GM12878 (cell line): ENCODE measurements at regions of chr9 and their contacts with region 1.

Region 1: GRCh38 chr9:135410831-135411473 is 68.6 kb upstream of the PPP1R26 start:
- DNase-seq: no peak
- ATAC-seq: no peak
- H3K4me3 ChIP-seq: no peak overlapping the region
- H3K27ac ChIP-seq: no peak overlapping the region
- H3K4me1 ChIP-seq: no peaks in the 10 kb centered on the region
- H3K27me3 ChIP-seq: no peaks in the 10 kb centered on the region
- CTCF ChIP-seq: no peak
- EP300 ChIP-seq: no peak
- POLR2A ChIP-seq: no peak
- RAD21 ChIP-seq: no peak

Region 2: DNA sequence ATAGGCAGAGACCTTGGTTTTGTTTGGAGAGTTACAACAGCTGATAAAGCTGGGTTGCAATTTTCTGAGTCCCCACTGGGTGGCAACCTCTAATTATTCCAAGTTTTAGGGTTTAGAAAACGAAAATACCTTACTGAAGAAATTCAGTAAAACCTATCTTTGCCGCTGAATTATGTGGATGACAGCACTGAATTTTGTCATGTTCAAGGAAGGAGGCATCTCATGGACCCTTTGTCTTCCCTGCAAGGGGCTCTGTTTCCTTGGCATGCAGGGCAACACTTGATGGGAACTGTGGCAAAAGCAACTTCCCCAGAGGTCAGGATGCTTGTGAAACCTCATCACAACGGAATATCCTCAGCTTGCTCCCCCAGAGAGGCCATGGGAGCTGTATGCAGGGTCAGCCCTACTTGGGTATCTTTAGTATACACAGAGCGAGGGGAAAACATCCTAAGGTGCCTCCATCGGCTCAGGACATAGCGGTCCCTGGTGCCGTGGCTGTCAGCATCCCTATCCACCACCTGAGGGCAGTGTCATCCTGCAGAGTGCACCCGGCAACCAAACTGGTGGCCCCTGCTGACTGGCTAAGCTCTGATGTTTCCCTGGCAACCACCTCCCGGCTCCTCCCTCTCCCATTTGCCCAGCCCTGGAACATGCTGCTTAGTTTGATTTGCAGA is 961.6 kb before region 1 on chr9:
- CTCF ChIA-PET with region 1: no interaction called
- POLR2A ChIA-PET with region 1: no interaction called
- RAD21 ChIA-PET with region 1: no interaction called
- SMC1A ChIA-PET with region 1: no interaction called
- in situ Hi-C with region 1: no loop called
- intact Hi-C with region 1: loop called (anchors 5 kb)
- DNase-seq: peak; percentile 34
- ATAC-seq: peak; percentile 100
- H3K4me3 ChIP-seq: no peak overlapping the region
- H3K27ac ChIP-seq: no peak overlapping the region
- H3K4me1 ChIP-seq: no peaks in the 10 kb centered on the region; the same call in 1 of the 2 replicates
- H3K27me3 ChIP-seq: no peaks in the 10 kb centered on the region; a peak in 1 of 4 replicates
- CTCF ChIP-seq: peak; percentile 77 to 94 (median 78)
- EP300 ChIP-seq: no peak
- POLR2A ChIP-seq: no peak
- RAD21 ChIP-seq: peak; percentile 75

Region 3: GRCh38 chr9:134992755-134993124 is 418.2 kb before region 1 on chr9:
- CTCF ChIA-PET with region 1: no interaction called
- POLR2A ChIA-PET with region 1: no interaction called
- RAD21 ChIA-PET with region 1: no interaction called
- SMC1A ChIA-PET with region 1: no interaction called
- in situ Hi-C with region 1: no loop called
- intact Hi-C with region 1: no loop called
- DNase-seq: no peak
- ATAC-seq: no peak
- H3K4me3 ChIP-seq: no peak overlapping the region
- H3K27ac ChIP-seq: no peak overlapping the region
- H3K4me1 ChIP-seq: no peaks in the 10 kb centered on the region
- H3K27me3 ChIP-seq: no peaks in the 10 kb centered on the region
- CTCF ChIP-seq: no peak
- EP300 ChIP-seq: no peak
- POLR2A ChIP-seq: no peak
- RAD21 ChIP-seq: no peak

Region 4: DNA sequence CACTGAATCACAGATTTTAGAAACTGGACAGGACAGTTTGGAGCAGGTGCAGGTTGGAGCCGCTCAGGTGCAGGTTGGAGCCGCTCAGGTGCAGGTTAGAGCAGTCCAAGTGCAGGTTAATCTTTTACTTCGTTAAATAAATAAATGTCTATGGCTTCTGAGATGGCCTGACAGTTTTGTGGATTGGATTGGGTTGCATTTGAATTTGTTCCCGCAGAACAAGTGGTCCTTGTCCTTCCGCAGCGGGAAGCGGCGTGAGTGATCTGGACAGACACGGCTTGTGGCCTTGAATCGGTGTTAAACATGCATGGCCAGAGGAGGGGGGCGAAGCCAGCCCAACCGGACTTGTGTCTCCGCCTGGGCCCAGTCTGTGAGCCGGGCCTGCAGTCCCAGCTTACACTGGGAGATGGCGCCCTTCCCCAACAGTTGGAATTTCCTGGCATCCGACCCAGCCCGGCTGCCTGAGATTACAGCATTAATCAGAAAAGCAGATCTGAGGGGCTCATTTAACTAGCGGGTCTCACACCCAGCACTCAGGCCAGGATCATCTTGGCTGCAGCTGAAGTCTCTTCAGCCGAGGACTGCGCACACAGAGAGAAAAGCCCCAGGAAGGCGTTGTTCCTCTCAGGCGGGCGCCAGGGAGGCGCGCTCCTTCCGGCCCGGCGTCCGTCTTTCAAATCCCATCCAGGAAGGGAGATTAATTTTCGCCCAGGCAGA is 325.0 kb before region 1 on chr9:
- CTCF ChIA-PET with region 1: no interaction called
- POLR2A ChIA-PET with region 1: no interaction called
- RAD21 ChIA-PET with region 1: no interaction called
- SMC1A ChIA-PET with region 1: no interaction called
- in situ Hi-C with region 1: loop called (anchors 5 kb)
- intact Hi-C with region 1: loop called (anchors 5 kb)
- DNase-seq: no peak
- ATAC-seq: peak; percentile 71
- H3K4me3 ChIP-seq: no peak overlapping the region
- H3K27ac ChIP-seq: no peak overlapping the region
- H3K4me1 ChIP-seq: no peaks in the 10 kb centered on the region
- H3K27me3 ChIP-seq: peaks cover 3 to 4% of the 10 kb centered on the region in 2 experiments
- CTCF ChIP-seq: peak; percentile 70 to 81 (median 78)
- EP300 ChIP-seq: no peak
- POLR2A ChIP-seq: no peak
- RAD21 ChIP-seq: peak; percentile 77